Activated B cell treated with CpG ODN at 0.5 μM for 24 hours (primary cell): ENCODE measurements at regions of chr15 and their contacts with region 1.

Region 1: DNA sequence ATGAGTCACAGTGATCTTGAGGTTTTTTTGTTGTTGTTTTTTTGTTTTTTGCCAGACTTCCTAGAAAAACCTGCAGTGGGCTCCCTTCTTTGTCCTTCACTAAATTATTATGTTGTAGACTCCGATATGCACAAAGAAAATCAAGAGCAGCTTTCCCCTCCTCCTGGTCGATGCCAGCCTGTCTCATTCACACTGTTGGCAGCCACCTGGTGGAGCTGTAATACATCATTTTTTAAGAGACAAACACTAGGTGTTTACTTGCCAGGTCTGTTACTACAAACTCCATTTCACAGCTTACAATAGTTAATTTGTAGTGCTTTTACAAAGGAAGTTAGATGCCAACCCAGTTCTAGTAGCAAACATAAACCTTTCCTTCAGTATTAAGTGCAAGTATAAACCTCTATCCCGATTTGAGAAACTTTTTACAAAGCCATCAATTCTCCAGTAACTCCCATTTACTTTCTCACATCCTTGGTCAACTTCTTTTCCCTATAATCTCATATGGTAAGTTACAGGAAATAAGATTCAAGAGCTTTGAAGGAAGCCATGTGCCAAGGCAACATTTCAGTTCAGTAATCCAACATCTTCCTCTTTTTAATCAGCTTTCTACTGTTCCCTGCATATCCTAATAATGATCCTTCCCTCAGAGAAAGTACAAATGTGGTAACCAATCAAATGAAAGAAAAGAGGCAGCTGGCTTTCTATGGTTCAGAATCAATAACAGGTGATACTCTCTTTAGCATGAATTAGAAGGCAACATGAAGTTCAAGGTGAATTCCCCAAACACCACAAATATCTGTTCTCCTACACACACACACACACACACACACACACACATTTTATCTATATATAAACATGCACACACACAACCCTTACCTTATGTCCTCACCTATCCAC is 14.0 kb downstream of the AAGAB start:
- DNase-seq: no peak
- ATAC-seq: peak; percentile 9
- H3K4me3 Mint-ChIP-seq: peak overlapping the region; percentile 61
- H3K27ac Mint-ChIP-seq: peak overlapping the region; percentile 80
- H3K4me1 Mint-ChIP-seq: peaks cover 46% of the 10 kb centered on the region
- H3K27me3 Mint-ChIP-seq: no peaks in the 10 kb centered on the region
- CTCF ChIP-seq: no peak

Region 2: GRCh38 chr15:67059127-67059553 is 181.3 kb before region 1 on chr15:
- CTCF ChIA-PET with region 1: no interaction called
- POLR2A ChIA-PET with region 1: interaction called, 10 read pairs
- intact Hi-C with region 1: no loop called
- DNase-seq: no peak
- ATAC-seq: no peak
- H3K4me3 Mint-ChIP-seq: no peak overlapping the region
- H3K27ac Mint-ChIP-seq: no peak overlapping the region
- H3K4me1 Mint-ChIP-seq: peaks cover 28% of the 10 kb centered on the region
- H3K27me3 Mint-ChIP-seq: no peaks in the 10 kb centered on the region
- CTCF ChIP-seq: no peak

Region 3: GRCh38 chr15:67254238-67255175 is 14.0 kb after region 1 on chr15 and contains the starts of genes AAGAB and IQCH:
- CTCF ChIA-PET with region 1: no interaction called
- POLR2A ChIA-PET with region 1: interaction called, 18 read pairs
- intact Hi-C with region 1: loop called (anchors 1 kb)
- DNase-seq: peak; percentile 100
- ATAC-seq: peak; percentile 96
- H3K4me3 Mint-ChIP-seq: peak within 1 kb of the TSS; percentile 99
- H3K27ac Mint-ChIP-seq: peak within 1 kb of the TSS; percentile 95
- H3K4me1 Mint-ChIP-seq: peaks cover 26% of the 10 kb centered on the region
- H3K27me3 Mint-ChIP-seq: no peaks in the 10 kb centered on the region
- CTCF ChIP-seq: no peak
- total RNA-seq, gene AAGAB: 48.5 and 50.8 TPM in 2 replicates
- total RNA-seq, gene IQCH: 1.1 and 1.5 TPM in 2 replicates